ENCODE measurements at regions of chr1 and their contacts with region 1.

Region 1: GRCh38 chr1:235067263-235068172 is 61.1 kb downstream of the TOMM20 start:
- DNase-seq: peak; percentile 98 to 100
- H3K4me3 ChIP-seq: peak overlapping the region; percentile 39; the same call in 1 of the 2 replicates
- H3K27ac ChIP-seq: peak overlapping the region; percentile 100
- H3K4me1 ChIP-seq: peaks cover 68% of the 10 kb centered on the region
- H3K27me3 ChIP-seq: no peaks in the 10 kb centered on the region
- CTCF ChIP-seq: no peak

Region 2: GRCh38 chr1:234564642-234565037 is 502.9 kb before region 1 on chr1:
- CTCF ChIA-PET with region 1: no interaction called
- POLR2A ChIA-PET with region 1: no interaction called
- intact Hi-C with region 1: loop called (anchors 1 kb)
- DNase-seq: peak; percentile 88 to 99
- H3K4me3 ChIP-seq: no peak overlapping the region
- H3K27ac ChIP-seq: peak overlapping the region; percentile 90
- H3K4me1 ChIP-seq: peaks cover 45% of the 10 kb centered on the region
- H3K27me3 ChIP-seq: no peaks in the 10 kb centered on the region
- CTCF ChIP-seq: no peak

Region 3: DNA sequence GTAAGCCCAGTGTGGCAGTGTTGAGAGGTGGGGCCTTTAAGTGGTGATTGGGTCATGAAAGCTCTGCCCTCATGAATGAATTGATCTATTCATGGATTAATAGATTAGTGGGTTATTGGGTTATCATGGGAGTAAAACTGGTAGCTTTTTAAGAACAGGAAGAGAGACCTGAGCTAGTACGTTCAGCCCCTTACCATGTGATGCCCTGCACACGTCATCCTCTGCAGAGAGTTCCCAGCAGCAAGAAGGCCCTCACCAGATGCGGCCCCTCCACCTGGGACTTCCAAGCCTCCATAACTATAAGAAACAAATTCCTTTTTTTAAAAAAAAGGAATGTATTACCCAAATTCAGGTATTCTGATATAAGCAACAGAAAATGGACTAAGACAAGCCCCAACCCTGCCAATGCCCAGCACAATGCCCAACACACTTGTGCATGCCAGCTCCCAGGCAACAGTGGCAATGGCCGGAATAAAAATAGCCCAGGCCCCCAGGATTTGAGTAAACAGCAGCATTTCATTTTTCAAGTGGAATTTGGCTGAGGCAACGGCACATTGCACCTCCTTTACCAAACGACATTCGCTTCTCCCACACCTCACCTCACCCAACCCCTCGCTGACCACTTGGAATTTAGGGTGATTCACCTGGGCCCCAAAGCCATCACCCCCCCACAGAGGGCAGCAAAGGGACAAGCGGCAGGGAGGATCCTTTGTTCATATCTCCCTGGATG is 154.8 kb before region 1 on chr1:
- CTCF ChIA-PET with region 1: no interaction called
- POLR2A ChIA-PET with region 1: no interaction called
- intact Hi-C with region 1: loop called (anchors 2 kb)
- DNase-seq: peak in 1 of 2 experiments; percentile 89
- H3K4me3 ChIP-seq: no peak overlapping the region
- H3K27ac ChIP-seq: no peak overlapping the region
- H3K4me1 ChIP-seq: no peaks in the 10 kb centered on the region
- H3K27me3 ChIP-seq: no peaks in the 10 kb centered on the region
- CTCF ChIP-seq: no peak

Region 4: DNA sequence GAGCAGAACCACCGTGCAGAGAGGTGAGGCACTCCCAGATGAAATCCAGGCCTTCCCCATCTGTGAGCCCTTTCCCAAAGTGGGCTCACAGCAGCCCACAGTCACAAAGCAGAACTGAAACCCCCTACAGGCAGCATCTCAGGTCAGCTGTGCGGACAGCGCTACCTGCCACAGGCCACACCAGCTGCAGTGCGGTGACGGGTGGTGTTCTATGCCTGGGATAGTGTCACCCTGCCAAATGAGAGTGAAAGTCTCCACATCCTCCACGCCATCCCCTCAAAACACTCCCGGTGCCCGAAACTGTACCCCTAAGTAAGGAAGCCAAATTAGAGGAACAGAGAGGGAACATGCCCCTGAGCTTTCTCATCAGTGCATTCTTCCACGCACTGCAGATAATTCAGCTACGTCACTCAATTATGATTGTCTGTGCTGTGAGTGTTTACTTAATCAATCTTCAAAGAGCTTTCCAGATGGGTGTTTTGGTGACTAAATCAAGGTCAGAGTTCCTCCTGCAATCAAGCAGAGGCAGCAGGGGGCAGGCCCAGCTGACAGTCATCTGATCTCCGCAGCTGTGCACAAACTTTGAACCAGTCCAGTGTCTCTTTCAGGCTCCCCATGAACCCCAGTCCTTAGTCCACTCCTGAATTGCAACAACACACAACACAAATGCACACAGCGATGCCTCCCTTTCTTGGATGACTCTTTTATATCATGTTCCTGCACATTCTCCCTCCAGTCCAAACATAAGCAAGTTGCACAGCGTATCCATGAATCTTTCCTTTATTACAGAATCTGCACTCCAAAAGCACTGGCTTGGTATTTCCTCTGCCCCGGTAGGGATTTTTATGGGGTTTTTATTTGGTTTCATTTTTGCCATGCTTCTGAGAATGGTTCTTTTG is 88.9 kb before region 1 on chr1:
- CTCF ChIA-PET with region 1: interaction called, 3 read pairs
- POLR2A ChIA-PET with region 1: interaction called, 12 read pairs
- intact Hi-C with region 1: loop called (anchors 1 kb)
- DNase-seq: peak; percentile 45 to 93
- H3K4me3 ChIP-seq: peak overlapping the region; percentile 30; the same call in 1 of the 2 replicates
- H3K27ac ChIP-seq: peak overlapping the region; percentile 99
- H3K4me1 ChIP-seq: peaks cover 99% of the 10 kb centered on the region
- H3K27me3 ChIP-seq: no peaks in the 10 kb centered on the region
- CTCF ChIP-seq: no peak

Region 5: DNA sequence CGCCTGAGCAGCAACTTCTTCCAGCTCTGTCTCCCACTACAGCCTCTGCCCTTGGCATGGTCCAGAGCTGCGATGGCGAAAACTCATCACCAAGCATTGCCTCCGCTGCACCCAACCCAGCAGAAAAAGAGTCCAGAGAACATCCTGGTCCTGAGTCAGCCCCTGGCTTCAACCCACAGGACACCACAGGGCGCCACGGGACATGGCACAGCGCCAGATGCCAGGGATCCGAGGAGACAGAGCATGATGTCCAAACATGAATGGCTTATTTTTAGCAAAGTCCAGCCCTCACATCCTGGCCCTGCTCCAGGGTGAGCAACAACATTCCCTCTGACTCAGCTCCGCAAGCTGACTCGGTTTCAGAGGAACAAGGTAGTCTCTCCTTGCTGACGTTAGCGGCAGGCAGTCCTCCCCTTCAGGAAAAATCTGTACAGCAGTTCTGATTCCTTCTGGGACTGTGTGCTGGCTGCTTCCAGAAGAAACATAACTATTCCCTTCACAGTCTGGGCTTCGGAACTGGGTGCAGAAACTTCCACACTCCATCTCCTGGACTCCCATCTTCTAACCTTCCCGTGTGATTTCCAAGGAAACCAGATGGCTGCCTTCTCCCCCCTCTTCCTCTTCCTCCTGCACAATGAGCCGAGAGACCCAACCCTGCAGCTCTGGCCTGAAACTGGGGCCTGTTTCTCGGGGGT is 70.2 kb before region 1 on chr1:
- CTCF ChIA-PET with region 1: interaction called, 3 read pairs
- POLR2A ChIA-PET with region 1: interaction called, 12 read pairs
- intact Hi-C with region 1: loop called (anchors 1 kb)
- DNase-seq: peak; percentile 99 to 100
- H3K4me3 ChIP-seq: peak overlapping the region; percentile 45
- H3K27ac ChIP-seq: peak overlapping the region; percentile 100
- H3K4me1 ChIP-seq: peaks cover 34% of the 10 kb centered on the region
- H3K27me3 ChIP-seq: no peaks in the 10 kb centered on the region
- CTCF ChIP-seq: no peak

Region 6: DNA sequence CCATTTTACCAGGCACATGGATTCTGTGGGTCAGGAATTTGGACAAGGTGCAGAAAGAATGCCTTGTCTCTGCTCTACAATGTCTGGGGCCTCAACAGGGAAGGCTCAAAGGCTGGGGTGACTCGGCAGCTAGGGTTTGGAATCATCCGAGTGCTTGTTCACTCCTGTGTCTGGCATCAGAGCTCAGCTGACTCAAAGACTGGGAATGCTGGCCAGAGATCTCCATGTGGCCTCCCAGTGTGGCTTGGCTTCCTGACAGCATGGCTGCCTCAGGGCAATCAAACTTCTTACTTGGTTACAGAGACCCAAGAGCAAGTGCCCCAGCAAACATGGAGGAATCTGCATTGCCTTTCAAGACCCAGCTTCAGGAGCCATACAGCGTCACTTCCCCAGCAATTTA is 49.4 kb before region 1 on chr1:
- CTCF ChIA-PET with region 1: no interaction called
- POLR2A ChIA-PET with region 1: interaction called, 4 read pairs
- intact Hi-C with region 1: loop called (anchors 1 kb)
- DNase-seq: peak; percentile 82 to 87
- H3K4me3 ChIP-seq: no peak overlapping the region
- H3K27ac ChIP-seq: peak overlapping the region; percentile 74
- H3K4me1 ChIP-seq: peaks cover 48% of the 10 kb centered on the region
- H3K27me3 ChIP-seq: no peaks in the 10 kb centered on the region
- CTCF ChIP-seq: no peak

Region 7: DNA sequence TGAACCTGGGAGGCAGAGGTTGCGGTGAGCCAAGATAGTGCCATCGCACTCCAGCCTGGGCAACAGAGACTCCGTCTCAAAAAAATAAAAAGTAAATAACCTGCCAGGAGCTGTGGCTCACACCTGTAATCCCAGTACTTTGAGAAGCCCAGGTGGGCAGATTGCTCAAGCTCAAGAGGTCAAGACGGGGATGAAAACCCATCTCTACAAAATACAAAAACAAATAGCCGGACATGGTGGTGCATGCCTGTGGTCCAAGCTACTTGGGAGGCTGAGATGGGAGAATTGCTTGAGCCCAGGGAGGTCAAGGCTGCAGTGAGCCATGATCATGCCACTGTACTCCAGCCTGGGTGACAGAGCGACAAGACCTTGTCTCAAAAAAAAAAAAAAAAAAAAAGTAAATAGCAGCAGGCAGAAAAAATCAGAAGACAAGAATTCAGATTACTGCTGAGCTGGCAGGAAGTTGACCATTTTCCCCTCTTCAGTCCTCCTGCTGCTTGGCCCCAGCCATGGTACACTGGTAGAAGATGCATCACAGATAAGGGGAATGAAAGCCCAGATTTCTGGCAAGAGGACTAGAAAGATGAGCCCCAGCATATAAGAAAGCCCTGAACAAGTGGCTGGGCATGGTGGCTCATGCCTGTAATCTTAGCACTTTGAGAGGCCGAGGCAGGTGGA is 36.5 kb before region 1 on chr1:
- CTCF ChIA-PET with region 1: no interaction called
- POLR2A ChIA-PET with region 1: no interaction called
- intact Hi-C with region 1: no loop called
- DNase-seq: no peak
- H3K4me3 ChIP-seq: no peak overlapping the region
- H3K27ac ChIP-seq: no peak overlapping the region
- H3K4me1 ChIP-seq: peaks cover 14% of the 10 kb centered on the region
- H3K27me3 ChIP-seq: no peaks in the 10 kb centered on the region
- CTCF ChIP-seq: no peak

Measured in PC-9 (cell line).